Posterior vena cava (tissue), 2 donors: ENCODE measurements at regions of chr2 and their contacts with region 1.

Region 1: GRCh38 chr2:41966431-41966893 is 81.4 kb upstream of the PKDCC start:
- DNase-seq: peak; percentile 98

Region 2: GRCh38 chr2:41869542-41870264 is 96.8 kb before region 1 on chr2:
- intact Hi-C with region 1: loop called in 1 of 2 experiments (anchors 10 kb)
- DNase-seq: peak; percentile 92

Region 3: GRCh38 chr2:41913311-41913710 is 53.2 kb before region 1 on chr2:
- intact Hi-C with region 1: loop called in 1 of 2 experiments (anchors 1 kb)
- DNase-seq: no peak

Region 4: GRCh38 chr2:41933585-41934320 is 32.7 kb before region 1 on chr2:
- intact Hi-C with region 1: loop called in 1 of 2 experiments (anchors 1 kb)
- DNase-seq: no peak

Region 5: GRCh38 chr2:41994207-41994606 is 27.7 kb after region 1 on chr2:
- intact Hi-C with region 1: no loop called
- DNase-seq: no peak

Region 6: DNA sequence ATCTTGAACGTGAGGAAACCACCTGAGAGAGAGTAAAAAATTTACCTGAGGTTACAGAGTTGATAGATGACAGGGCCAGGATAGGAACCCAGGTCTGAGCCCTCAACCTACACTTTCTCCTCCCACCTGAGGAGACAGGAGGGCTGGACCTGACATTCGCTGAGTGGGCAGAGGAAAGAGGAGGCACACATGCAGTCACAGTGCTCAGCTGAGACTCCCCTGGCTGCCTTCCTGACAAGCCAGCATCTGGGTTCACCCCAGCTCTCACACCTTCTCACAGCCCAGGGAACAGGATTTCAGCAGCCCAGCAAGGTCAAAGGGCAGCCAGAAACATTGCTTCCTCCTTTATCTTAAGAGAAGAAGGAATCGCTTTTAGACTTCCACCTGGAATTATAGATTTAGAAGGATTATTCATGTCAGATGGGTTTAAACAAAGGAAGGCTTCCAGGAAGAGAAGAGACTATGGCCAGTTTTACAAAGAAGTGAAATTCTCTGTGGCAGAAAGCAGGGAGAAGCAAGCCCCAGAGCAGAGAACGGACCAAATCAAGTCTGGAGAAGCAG is 63.3 kb after region 1 on chr2:
- intact Hi-C with region 1: loop called in 1 of 2 experiments (anchors 10 kb)
- DNase-seq: no peak

Region 7: DNA sequence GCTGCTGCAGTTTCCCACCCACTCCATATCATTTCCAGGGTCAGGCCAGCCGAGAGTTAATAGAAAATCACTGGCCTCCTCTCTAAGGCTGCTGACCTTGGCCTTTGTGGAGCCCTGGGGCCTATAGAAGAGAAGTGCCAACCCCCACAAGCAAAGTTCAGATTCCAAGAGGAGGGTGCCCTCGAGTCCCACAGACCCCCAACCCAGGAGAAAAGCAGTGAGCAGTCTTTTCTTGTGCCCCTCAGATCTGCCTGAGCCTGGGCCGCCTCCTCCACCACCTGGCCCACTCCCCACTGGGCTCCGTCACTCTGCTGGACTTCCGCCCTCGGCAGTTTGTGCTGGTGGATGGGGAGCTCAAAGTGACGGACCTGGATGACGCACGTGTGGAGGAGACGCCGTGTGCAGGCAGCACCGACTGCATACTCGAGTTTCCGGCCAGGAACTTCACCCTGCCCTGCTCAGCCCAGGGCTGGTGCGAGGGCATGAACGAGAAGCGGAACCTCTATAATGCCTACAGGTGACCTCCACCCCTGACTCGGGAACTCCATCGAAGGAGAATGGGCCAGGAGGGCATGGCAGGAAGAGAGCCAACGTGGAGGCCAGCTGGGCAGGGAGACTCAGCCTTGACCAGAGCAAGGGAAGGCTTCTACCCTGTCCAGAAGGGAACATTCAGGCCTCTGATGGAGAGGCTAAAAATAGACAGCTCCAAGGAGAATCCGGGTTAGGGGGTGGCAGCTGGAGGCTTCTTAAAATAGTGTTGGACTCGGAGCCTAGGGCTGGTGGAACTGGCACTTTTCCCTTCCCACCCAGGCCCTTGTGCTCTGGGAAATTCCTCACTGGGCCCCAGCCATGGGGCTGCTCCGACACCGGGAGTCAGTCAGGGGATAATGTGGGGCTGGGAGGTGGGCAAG is 87.6 kb after region 1 on chr2:
- intact Hi-C with region 1: loop called in 1 of 2 experiments (anchors 5 kb)
- DNase-seq: no peak